HEK293T (cell line): ENCODE measurements at regions of chr3 and their contacts with region 1.

Region 1: GRCh38 chr3:88149509-88150362 is at the start of gene C3orf38:
- DNase-seq: peak; percentile 80

Region 2: GRCh38 chr3:88058591-88059368 is 91.0 kb before region 1 on chr3 and contains the starts of genes CGGBP1 and ZNF654:
- CTCF ChIA-PET with region 1: no interaction called
- POLR2A ChIA-PET with region 1: interaction called, 10 read pairs
- DNase-seq: peak; percentile 91

Region 3: GRCh38 chr3:88131695-88132094 is 18.0 kb before region 1 on chr3:
- CTCF ChIA-PET with region 1: interaction called, 3 read pairs
- POLR2A ChIA-PET with region 1: interaction called, 10 read pairs
- DNase-seq: no peak